CD4-positive, alpha-beta T cell (primary cell): ENCODE measurements at regions of chr9 and their contacts with region 1.

Region 1: DNA sequence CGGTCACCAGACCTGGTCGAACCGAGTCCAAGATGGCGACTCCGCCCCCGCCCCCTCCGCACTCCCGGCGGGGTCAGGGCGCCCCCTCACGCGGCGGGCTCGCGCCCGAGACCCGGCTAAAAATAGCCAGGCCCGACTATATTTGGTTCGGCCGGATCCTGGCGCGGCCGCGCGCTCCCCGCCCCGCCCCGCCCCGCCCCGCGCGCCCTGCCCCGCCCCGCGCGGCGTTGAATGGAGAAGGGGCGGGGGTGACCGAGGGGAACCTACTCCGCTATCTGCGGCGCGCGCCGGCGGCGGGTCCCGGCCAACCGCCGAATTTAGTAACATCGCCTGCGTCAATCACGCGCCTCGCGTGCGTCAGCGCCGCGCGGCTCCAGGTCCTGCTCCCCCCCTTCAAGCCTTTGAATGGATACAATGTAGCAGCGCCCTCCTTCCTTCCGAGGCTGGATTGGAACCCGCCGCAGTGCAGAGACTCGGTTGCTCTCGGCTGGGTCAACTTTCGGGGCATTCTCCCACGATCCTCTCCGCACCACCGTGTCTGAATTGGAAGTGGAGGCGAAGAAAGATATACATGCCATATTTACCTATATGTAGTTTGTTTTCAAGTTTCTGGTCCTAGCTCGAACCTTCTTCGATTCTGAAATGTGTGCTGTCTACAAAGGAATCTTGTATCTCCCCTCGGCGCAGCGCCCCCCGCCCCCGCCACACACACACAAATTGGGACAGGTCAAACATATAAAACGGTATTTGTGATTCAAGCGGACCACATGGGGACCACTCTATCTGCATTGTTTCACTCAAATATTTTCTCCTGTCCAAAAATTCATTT is 1.6 kb upstream of the NR4A3 start:
- DNase-seq: peak; percentile 80 to 99 (median 88)
- ATAC-seq: peak; percentile 44
- H3K4me3 ChIP-seq: peak overlapping the region; percentile 82
- H3K4me3 Mint-ChIP-seq: peak overlapping the region; percentile 100
- H3K27ac ChIP-seq: peak overlapping the region; percentile 89 to 95
- H3K27ac Mint-ChIP-seq: peak overlapping the region; percentile 96
- H3K4me1 ChIP-seq: peaks cover 58% of the 10 kb centered on the region
- H3K4me1 Mint-ChIP-seq: peaks cover 58% of the 10 kb centered on the region
- H3K27me3 ChIP-seq: peaks cover 29 to 32% of the 10 kb centered on the region in 2 experiments
- H3K27me3 Mint-ChIP-seq: peaks cover 46% of the 10 kb centered on the region
- CTCF ChIP-seq: no peak

Region 2: GRCh38 chr9:98796364-98797101 is 1023.5 kb before region 1 on chr9 and contains the start of gene ANKS6:
- CTCF ChIA-PET with region 1: no interaction called
- POLR2A ChIA-PET with region 1: no interaction called
- intact Hi-C with region 1: loop called in 1 of 2 experiments (anchors 5 kb)
- DNase-seq: peak; percentile 64 to 93 (median 82)
- ATAC-seq: peak; percentile 91
- H3K4me3 ChIP-seq: peak within 1 kb of the TSS; percentile 80
- H3K4me3 Mint-ChIP-seq: peak within 1 kb of the TSS; percentile 94
- H3K27ac ChIP-seq: peak within 1 kb of the TSS; percentile 23 to 31
- H3K27ac Mint-ChIP-seq: peak within 1 kb of the TSS; percentile 72
- H3K4me1 ChIP-seq: peaks cover 22% of the 10 kb centered on the region
- H3K4me1 Mint-ChIP-seq: peaks cover 37% of the 10 kb centered on the region
- H3K27me3 ChIP-seq: no peaks in the 10 kb centered on the region
- H3K27me3 Mint-ChIP-seq: no peaks in the 10 kb centered on the region
- CTCF ChIP-seq: peak; percentile 32
- total RNA-seq, gene ANKS6: 11.8 to 12.2 TPM

Region 3: GRCh38 chr9:99807276-99807852 is 12.7 kb before region 1 on chr9:
- CTCF ChIA-PET with region 1: interaction called, 3 read pairs
- POLR2A ChIA-PET with region 1: interaction called, 12 read pairs
- intact Hi-C with region 1: loop called in 1 of 2 experiments (anchors 1 kb)
- DNase-seq: peak; percentile 53 to 85 (median 59)
- ATAC-seq: peak; percentile 84
- H3K4me3 ChIP-seq: no peak overlapping the region
- H3K4me3 Mint-ChIP-seq: no peak overlapping the region
- H3K27ac ChIP-seq: no peak overlapping the region
- H3K27ac Mint-ChIP-seq: no peak overlapping the region
- H3K4me1 ChIP-seq: no peaks in the 10 kb centered on the region
- H3K4me1 Mint-ChIP-seq: no peaks in the 10 kb centered on the region
- H3K27me3 ChIP-seq: no peaks in the 10 kb centered on the region
- H3K27me3 Mint-ChIP-seq: peaks cover 4% of the 10 kb centered on the region
- CTCF ChIP-seq: peak; percentile 95

Region 4: GRCh38 chr9:99889121-99889520 is 69.1 kb after region 1 on chr9:
- CTCF ChIA-PET with region 1: no interaction called
- POLR2A ChIA-PET with region 1: no interaction called
- intact Hi-C with region 1: no loop called
- DNase-seq: peak in 2 of 14 experiments; percentile 7 to 31
- ATAC-seq: no peak
- H3K4me3 ChIP-seq: no peak overlapping the region
- H3K4me3 Mint-ChIP-seq: no peak overlapping the region
- H3K27ac ChIP-seq: no peak overlapping the region
- H3K27ac Mint-ChIP-seq: no peak overlapping the region
- H3K4me1 ChIP-seq: no peaks in the 10 kb centered on the region
- H3K4me1 Mint-ChIP-seq: no peaks in the 10 kb centered on the region
- H3K27me3 ChIP-seq: no peaks in the 10 kb centered on the region
- H3K27me3 Mint-ChIP-seq: no peaks in the 10 kb centered on the region
- CTCF ChIP-seq: no peak

Region 5: GRCh38 chr9:100098887-100099721 is 279.0 kb after region 1 on chr9 and contains the starts of genes ERP44 and INVS:
- CTCF ChIA-PET with region 1: no interaction called
- POLR2A ChIA-PET with region 1: no interaction called
- intact Hi-C with region 1: loop called (anchors 2 to 5 kb)
- DNase-seq: peak; percentile 91 to 99 (median 95)
- ATAC-seq: peak; percentile 99
- H3K4me3 ChIP-seq: peak within 1 kb of the TSS; percentile 78
- H3K4me3 Mint-ChIP-seq: peak within 1 kb of the TSS; percentile 96
- H3K27ac ChIP-seq: peak within 1 kb of the TSS; percentile 58 to 80
- H3K27ac Mint-ChIP-seq: peak within 1 kb of the TSS; percentile 89
- H3K4me1 ChIP-seq: peaks cover 20% of the 10 kb centered on the region
- H3K4me1 Mint-ChIP-seq: peaks cover 50% of the 10 kb centered on the region
- H3K27me3 ChIP-seq: no peaks in the 10 kb centered on the region
- H3K27me3 Mint-ChIP-seq: no peaks in the 10 kb centered on the region
- CTCF ChIP-seq: no peak
- total RNA-seq, gene ERP44: 6.8 to 7.1 TPM
- total RNA-seq, gene INVS: 13.6 to 14.3 TPM

Region 6: DNA sequence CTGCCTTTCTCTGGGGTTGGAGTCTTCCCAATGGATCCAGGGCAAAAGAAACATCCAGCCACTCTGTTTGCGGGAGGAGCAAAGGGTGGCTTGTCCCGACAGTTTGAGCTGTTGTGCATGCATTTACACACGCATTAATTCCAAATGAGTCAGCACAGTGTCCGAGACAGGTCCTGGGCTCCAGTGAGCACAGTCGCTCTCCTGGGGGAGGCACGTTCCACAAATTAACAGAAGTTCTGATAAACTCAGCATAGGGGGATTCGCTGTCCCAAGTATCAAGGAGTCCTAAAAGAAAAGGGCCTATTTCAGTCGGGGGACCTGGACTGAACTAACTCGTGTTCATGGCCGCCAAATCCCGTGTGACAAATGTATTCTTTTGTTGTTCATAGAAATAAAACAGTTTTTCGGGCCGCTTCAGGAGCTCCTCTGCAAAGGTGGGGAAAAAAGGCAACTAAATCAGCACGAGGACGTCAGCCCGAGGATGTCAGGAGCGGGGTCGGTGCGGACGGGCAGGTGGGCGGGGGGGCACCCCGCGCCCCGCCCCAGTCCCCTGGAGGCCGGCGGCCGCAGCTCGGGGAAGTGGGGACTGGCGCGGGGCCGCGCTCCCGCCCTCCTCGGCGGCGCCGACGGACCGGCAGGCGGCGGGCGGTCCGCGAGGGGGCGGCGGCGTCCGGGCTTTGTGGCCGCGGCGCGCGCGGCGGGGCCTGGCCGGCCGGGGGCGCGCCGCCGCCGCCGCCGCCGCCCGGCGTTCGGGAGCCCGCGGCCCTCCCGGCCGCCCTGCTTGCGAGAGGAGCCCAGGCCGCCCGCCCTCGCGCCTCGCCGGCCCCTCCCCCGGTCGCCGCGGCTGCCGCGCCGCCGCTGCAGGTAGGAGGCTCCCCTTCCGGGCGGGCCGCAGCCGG is 606.7 kb after region 1 on chr9 and contains the start of gene MSANTD3:
- CTCF ChIA-PET with region 1: no interaction called
- POLR2A ChIA-PET with region 1: interaction called, 3 read pairs
- intact Hi-C with region 1: loop called in 1 of 2 experiments (anchors 5 kb)
- DNase-seq: peak; percentile 28 to 79 (median 54)
- ATAC-seq: peak; percentile 80
- H3K4me3 ChIP-seq: peak within 1 kb of the TSS; percentile 78
- H3K4me3 Mint-ChIP-seq: peak within 1 kb of the TSS; percentile 98
- H3K27ac ChIP-seq: peak within 1 kb of the TSS in 1 of 2 donors; percentile 0
- H3K27ac Mint-ChIP-seq: peak within 1 kb of the TSS; percentile 96
- H3K4me1 ChIP-seq: peaks cover 20% of the 10 kb centered on the region
- H3K4me1 Mint-ChIP-seq: peaks cover 44% of the 10 kb centered on the region
- H3K27me3 ChIP-seq: peaks cover 0 to 7% of the 10 kb centered on the region in 2 experiments
- H3K27me3 Mint-ChIP-seq: peaks cover 7% of the 10 kb centered on the region
- CTCF ChIP-seq: no peak
- total RNA-seq, gene MSANTD3: 8.8 to 9.6 TPM

Region 7: GRCh38 chr9:101533334-101534107 is 1713.5 kb after region 1 on chr9 and contains the start of gene RNF20:
- CTCF ChIA-PET with region 1: no interaction called
- POLR2A ChIA-PET with region 1: no interaction called
- intact Hi-C with region 1: loop called in 1 of 2 experiments (anchors 10 kb)
- DNase-seq: peak; percentile 98 to 100 (median 99)
- ATAC-seq: peak; percentile 90
- H3K4me3 ChIP-seq: peak within 1 kb of the TSS; percentile 67
- H3K4me3 Mint-ChIP-seq: peak within 1 kb of the TSS; percentile 90
- H3K27ac ChIP-seq: peak within 1 kb of the TSS; percentile 91 to 96
- H3K27ac Mint-ChIP-seq: peak within 1 kb of the TSS; percentile 97
- H3K4me1 ChIP-seq: peaks cover 16% of the 10 kb centered on the region
- H3K4me1 Mint-ChIP-seq: peaks cover 16% of the 10 kb centered on the region
- H3K27me3 ChIP-seq: no peaks in the 10 kb centered on the region
- H3K27me3 Mint-ChIP-seq: peaks cover 4% of the 10 kb centered on the region
- CTCF ChIP-seq: no peak
- total RNA-seq, gene RNF20: 26.9 to 27.6 TPM